OCI-LY7 (cell line): ENCODE measurements at regions of chr3 and their contacts with region 1.

Region 1: GRCh38 chr3:133547432-133548041 is 25.9 kb upstream of the CDV3 start:
- DNase-seq: no peak
- H3K4me3 ChIP-seq: no peak overlapping the region
- H3K27ac ChIP-seq: no peak overlapping the region
- H3K4me1 ChIP-seq: peaks cover 44% of the 10 kb centered on the region
- CTCF ChIP-seq: no peak

Region 2: DNA sequence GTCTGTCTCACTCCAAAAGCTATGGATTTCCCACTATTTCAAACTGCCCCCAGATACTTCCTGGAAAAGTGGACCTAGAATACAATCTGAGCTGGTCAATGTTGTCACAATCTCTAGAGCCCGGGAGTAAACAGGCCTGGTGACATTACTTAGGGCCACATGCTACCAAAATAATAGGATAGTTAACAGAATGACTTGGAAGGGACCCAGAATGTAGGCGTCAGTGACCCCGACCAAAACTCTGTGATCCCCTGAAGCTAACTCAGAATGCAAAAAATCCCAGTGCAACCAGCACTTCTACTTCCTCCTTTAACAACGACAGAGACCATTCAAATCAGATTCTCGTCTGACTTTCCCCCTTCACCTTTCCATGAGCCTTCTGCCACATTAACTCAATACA is 25.6 kb before region 1 on chr3:
- CTCF ChIA-PET with region 1: no interaction called
- POLR2A ChIA-PET with region 1: interaction called, 10 read pairs
- intact Hi-C with region 1: no loop called
- DNase-seq: peak; percentile 25
- H3K4me3 ChIP-seq: no peak overlapping the region
- H3K27ac ChIP-seq: no peak overlapping the region
- H3K4me1 ChIP-seq: peaks cover 15% of the 10 kb centered on the region
- CTCF ChIP-seq: no peak

Region 3: DNA sequence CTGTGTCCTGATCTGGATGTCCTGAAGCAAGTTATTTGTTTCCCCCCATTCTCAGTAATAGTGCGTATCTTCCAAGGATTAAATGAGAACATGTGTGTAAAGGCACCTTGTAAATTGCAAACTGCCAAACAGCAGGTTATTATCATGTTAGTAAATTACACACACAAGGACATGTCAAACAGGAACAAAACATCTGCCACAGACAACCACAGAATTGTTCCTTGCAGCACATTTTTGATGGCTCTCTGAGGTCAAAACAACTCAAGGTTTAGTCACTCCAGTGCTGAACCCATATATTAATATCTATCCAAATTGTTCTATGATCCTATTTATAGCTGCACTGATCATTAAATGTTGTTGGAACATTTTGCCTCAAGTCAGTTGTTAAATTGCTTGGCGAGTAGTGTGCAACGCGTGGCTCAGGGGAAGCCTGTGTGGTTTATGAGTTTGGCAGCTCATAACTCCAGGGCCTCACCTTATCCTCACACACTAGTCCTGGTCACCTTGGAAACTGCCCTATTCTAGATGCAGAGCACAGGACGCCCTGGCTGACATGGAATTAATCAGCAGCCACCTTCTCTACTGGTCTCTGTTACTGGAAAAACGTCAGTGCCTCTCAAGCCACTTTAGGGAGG is 20.3 kb before region 1 on chr3:
- CTCF ChIA-PET with region 1: no interaction called
- POLR2A ChIA-PET with region 1: interaction called, 12 read pairs
- intact Hi-C with region 1: no loop called
- DNase-seq: no peak
- H3K4me3 ChIP-seq: no peak overlapping the region
- H3K27ac ChIP-seq: no peak overlapping the region
- H3K4me1 ChIP-seq: peaks cover 8% of the 10 kb centered on the region
- CTCF ChIP-seq: no peak

Region 4: GRCh38 chr3:133563186-133563591 is 15.7 kb after region 1 on chr3:
- CTCF ChIA-PET with region 1: interaction called, 3 read pairs
- POLR2A ChIA-PET with region 1: interaction called, 35 read pairs
- intact Hi-C with region 1: no loop called
- DNase-seq: no peak
- H3K4me3 ChIP-seq: no peak overlapping the region
- H3K27ac ChIP-seq: no peak overlapping the region
- H3K4me1 ChIP-seq: peaks cover 34% of the 10 kb centered on the region
- CTCF ChIP-seq: no peak